ENCODE measurements at regions of chr14 and their contacts with region 1.

Region 1: DNA sequence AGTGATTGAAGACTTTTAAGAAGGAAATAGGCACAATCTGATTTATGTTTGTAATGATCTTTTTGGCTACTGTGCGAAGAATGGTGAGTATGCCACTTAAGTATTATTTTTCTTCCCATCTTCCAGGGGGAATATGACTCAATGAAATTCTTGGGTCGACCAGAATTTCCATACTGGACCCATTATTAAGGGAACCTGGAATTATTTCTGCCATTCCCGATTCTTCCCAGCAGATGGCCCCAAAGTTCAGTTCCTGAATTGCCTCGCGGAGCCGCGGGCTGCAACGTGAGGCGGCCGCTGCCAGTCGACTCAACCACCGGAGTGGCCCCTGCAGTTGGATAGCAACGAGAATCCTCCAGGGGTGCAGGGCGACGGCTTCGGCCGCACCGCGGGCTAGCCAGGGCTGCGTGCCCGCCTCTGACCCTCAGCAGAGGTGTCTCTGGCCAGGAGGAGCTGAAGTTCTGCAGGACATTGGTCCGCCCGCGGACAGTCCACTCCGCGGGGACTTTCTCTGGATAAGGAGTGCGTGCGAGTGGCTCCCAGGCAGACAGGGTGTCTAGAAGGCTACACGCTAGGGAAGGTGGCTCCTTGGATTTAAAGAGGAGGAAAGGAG is 628 bp upstream of the TSHR start:
- DNase-seq: peak; percentile 48 to 71 (median 66)
- ATAC-seq: peak; percentile 84
- H3K4me3 ChIP-seq: peak overlapping the region; percentile 87
- H3K4me3 Mint-ChIP-seq: peak overlapping the region; percentile 80 to 93 (median 88)
- H3K27ac ChIP-seq: no peak overlapping the region
- H3K27ac Mint-ChIP-seq: peak overlapping the region in 4 of 9 donors; percentile 51 to 86 (median 67)
- H3K4me1 ChIP-seq: peaks cover 12 to 18% of the 10 kb centered on the region in 2 donors
- H3K4me1 Mint-ChIP-seq: peaks cover 12 to 51% (median 37%) of the 10 kb centered on the region in 7 donors
- H3K27me3 ChIP-seq: no peaks in the 10 kb centered on the region
- H3K27me3 Mint-ChIP-seq: peaks cover 0 to 61% (median 4%) of the 10 kb centered on the region in 5 donors

Region 2: DNA sequence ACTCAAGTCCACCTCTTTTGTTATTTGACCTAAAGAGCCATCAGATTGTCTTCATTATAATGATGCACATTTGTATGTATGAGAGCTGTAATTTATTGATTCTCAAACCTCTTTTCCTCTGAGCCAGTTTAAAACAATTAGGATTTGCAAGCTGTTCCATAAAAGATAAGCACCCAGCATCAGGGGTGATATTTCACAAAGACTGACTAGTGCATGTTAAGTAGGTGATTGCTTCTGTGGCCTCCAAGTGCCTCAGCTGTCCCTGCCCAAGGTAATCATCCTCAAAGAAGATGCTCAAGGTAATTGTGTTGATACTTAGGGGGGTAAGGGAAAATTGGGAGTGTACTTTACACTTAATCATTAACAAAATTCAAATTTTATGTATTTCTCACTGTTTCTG is 31.4 kb before region 1 on chr14:
- CTCF ChIA-PET with region 1: no interaction called
- POLR2A ChIA-PET with region 1: no interaction called
- intact Hi-C with region 1: no loop called
- DNase-seq: no peak
- ATAC-seq: no peak
- H3K4me3 ChIP-seq: no peak overlapping the region
- H3K4me3 Mint-ChIP-seq: no peak overlapping the region
- H3K27ac ChIP-seq: no peak overlapping the region
- H3K27ac Mint-ChIP-seq: no peak overlapping the region
- H3K4me1 ChIP-seq: no peaks in the 10 kb centered on the region
- H3K4me1 Mint-ChIP-seq: peaks cover 0 to 29% (median 0%) of the 10 kb centered on the region in 7 donors
- H3K27me3 ChIP-seq: no peaks in the 10 kb centered on the region
- H3K27me3 Mint-ChIP-seq: peaks cover 0 to 4% (median 0%) of the 10 kb centered on the region in 5 donors

Region 3: DNA sequence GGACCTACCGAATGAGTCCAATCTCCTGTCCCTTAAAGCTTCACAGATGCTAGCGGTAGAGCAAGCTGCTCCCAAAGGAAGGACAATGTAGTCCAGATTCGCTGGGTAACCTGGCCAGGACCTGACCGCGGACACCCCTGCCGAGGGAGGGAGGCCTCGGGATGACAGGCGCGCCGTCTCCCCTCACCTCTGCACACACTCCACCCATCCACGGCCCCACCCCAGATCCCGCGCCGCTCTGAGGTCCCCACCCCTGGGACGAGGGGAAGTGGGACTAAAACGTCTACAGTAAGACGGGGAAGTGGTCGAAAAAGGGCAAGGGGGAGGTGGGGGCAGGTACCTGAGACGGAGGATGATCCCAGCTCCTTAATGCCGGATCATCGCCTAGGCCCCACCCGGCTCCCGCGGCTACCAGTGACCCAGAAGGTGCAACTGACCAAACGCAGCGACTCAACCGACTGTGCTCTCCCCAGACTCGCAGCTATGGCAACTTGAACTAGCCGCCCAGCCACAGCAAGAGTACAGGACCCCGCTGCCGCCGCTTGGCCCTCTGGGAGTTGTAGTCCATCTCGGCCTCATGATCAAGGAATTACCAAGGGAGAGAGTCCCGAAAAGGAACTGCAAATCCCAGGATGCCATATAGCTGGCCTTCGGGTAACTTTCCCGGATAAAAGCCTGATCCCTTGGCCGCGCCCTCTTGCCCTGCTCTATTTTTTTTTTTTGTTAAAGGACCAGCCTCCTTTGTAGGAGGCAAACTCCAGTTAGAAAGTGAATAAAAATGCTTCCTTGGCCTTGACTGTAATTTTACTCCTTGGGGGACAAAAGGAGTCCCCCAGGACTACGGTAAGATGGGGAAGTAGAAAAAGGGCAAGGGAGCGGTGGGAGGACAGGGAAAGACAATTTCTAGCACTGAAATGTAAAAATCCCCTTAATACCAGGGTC is 13.3 kb before region 1 on chr14 and contains the start of gene CEP128:
- CTCF ChIA-PET with region 1: no interaction called
- POLR2A ChIA-PET with region 1: interaction called, 5 read pairs
- intact Hi-C with region 1: loop called (anchors 1 to 2 kb)
- DNase-seq: peak; percentile 30 to 82 (median 61)
- ATAC-seq: peak; percentile 93
- H3K4me3 ChIP-seq: peak within 1 kb of the TSS; percentile 78
- H3K4me3 Mint-ChIP-seq: peak within 1 kb of the TSS; percentile 84 to 93 (median 89)
- H3K27ac ChIP-seq: peak within 1 kb of the TSS; percentile 44
- H3K27ac Mint-ChIP-seq: peak within 1 kb of the TSS; percentile 52 to 89 (median 78)
- H3K4me1 ChIP-seq: peaks cover 10 to 11% of the 10 kb centered on the region in 2 donors
- H3K4me1 Mint-ChIP-seq: peaks cover 18 to 33% (median 20%) of the 10 kb centered on the region in 7 donors
- H3K27me3 ChIP-seq: no peaks in the 10 kb centered on the region
- H3K27me3 Mint-ChIP-seq: peaks cover 0 to 6% (median 4%) of the 10 kb centered on the region in 5 donors
- total RNA-seq, gene CEP128: 7.7 to 22.8 (median 10.1) TPM

Region 4: DNA sequence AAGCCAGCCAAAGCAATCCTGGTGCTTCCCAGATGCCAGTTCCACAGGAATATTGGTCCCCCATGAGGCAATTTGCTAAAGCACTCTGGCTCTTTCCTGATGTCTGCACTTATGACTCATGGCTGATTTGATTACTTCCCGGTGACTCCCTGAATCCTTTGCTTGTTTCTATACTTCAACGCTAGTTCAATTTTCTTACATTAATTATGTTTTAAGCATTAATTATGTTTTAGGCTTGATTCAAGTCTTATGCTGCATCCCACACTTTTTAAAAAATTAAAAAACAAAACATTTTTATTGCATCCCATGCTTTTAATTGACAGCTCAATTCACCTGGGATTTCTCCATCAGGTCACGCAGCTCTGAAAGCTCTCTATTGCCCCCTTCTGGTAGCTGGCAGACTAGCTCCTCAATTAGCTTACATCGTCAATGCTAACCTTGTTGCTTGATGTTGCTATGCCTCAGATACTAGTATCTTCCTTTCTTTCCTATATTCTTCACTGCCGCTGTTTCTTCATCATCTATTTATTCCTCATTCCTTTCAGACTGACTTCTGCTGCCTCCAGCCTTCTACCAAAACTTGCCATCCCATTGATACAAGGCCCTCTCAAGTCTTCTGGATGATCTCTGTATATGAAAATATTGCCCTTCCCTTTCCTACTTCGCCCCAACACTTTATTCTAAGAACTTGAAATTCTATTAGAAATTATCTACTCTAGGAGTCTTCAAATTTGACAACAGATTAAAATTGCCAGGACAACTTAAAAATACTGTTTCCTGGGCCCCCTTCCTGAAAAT is 32.6 kb after region 1 on chr14:
- CTCF ChIA-PET with region 1: interaction called, 81 read pairs
- POLR2A ChIA-PET with region 1: interaction called, 5 read pairs
- intact Hi-C with region 1: loop called (anchors 1 kb)
- DNase-seq: peak; percentile 13 to 74 (median 58)
- ATAC-seq: peak; percentile 85
- H3K4me3 ChIP-seq: no peak overlapping the region
- H3K4me3 Mint-ChIP-seq: no peak overlapping the region
- H3K27ac ChIP-seq: no peak overlapping the region
- H3K27ac Mint-ChIP-seq: no peak overlapping the region
- H3K4me1 ChIP-seq: no peaks in the 10 kb centered on the region
- H3K4me1 Mint-ChIP-seq: peaks cover 0 to 14% (median 0%) of the 10 kb centered on the region in 7 donors
- H3K27me3 ChIP-seq: no peaks in the 10 kb centered on the region
- H3K27me3 Mint-ChIP-seq: peaks cover 0 to 21% (median 11%) of the 10 kb centered on the region in 5 donors

Region 5: DNA sequence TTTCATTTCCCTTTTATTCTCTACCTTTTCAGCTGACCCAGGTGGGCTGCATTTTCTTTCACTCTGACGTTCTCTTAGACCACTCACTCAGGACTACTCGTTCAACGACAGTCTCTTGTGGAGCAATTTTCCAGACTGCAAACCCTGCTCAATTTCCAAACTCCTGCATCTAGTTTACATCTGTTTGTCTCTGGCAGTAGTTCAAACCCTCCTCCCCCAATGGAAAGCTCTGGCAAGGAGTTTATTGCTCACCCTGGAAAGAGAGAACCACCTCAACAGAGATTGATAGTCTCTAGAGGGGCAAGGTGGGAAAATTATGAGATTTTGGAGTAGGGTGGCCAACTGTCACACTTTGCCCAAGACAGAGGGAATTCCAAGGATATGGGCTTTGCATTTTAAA is 130.8 kb after region 1 on chr14:
- CTCF ChIA-PET with region 1: no interaction called
- POLR2A ChIA-PET with region 1: no interaction called
- intact Hi-C with region 1: no loop called
- DNase-seq: no peak
- ATAC-seq: no peak
- H3K4me3 ChIP-seq: no peak overlapping the region
- H3K4me3 Mint-ChIP-seq: no peak overlapping the region
- H3K27ac ChIP-seq: no peak overlapping the region
- H3K27ac Mint-ChIP-seq: no peak overlapping the region
- H3K4me1 ChIP-seq: no peaks in the 10 kb centered on the region
- H3K4me1 Mint-ChIP-seq: no peaks in the 10 kb centered on the region
- H3K27me3 ChIP-seq: no peaks in the 10 kb centered on the region
- H3K27me3 Mint-ChIP-seq: no peaks in the 10 kb centered on the region

Region 6: GRCh38 chr14:81164167-81164774 is 209.5 kb after region 1 on chr14:
- CTCF ChIA-PET with region 1: no interaction called
- POLR2A ChIA-PET with region 1: no interaction called
- intact Hi-C with region 1: loop called in 1 of 2 experiments (anchors 1 kb)
- DNase-seq: peak in 5 of 9 donors; percentile 6 to 56 (median 10)
- ATAC-seq: peak; percentile 79
- H3K4me3 ChIP-seq: no peak overlapping the region
- H3K4me3 Mint-ChIP-seq: no peak overlapping the region
- H3K27ac ChIP-seq: no peak overlapping the region
- H3K27ac Mint-ChIP-seq: no peak overlapping the region
- H3K4me1 ChIP-seq: peaks cover under 1 to 2% of the 10 kb centered on the region in 2 donors
- H3K4me1 Mint-ChIP-seq: peaks cover under 1 to 24% (median 11%) of the 10 kb centered on the region in 7 donors
- H3K27me3 ChIP-seq: no peaks in the 10 kb centered on the region
- H3K27me3 Mint-ChIP-seq: no peaks in the 10 kb centered on the region

Region 7: GRCh38 chr14:81211844-81212243 is 257.1 kb after region 1 on chr14:
- CTCF ChIA-PET with region 1: interaction called, 3 read pairs
- POLR2A ChIA-PET with region 1: no interaction called
- intact Hi-C with region 1: loop called in 1 of 2 experiments (anchors 1 kb)
- DNase-seq: peak in 6 of 9 donors; percentile 5 to 37 (median 18)
- ATAC-seq: peak; percentile 82
- H3K4me3 ChIP-seq: no peak overlapping the region
- H3K4me3 Mint-ChIP-seq: no peak overlapping the region
- H3K27ac ChIP-seq: no peak overlapping the region
- H3K27ac Mint-ChIP-seq: peak overlapping the region in 2 of 9 donors; percentile 23 to 72
- H3K4me1 ChIP-seq: no peaks in the 10 kb centered on the region
- H3K4me1 Mint-ChIP-seq: peaks cover 32 to 66% (median 56%) of the 10 kb centered on the region in 7 donors
- H3K27me3 ChIP-seq: no peaks in the 10 kb centered on the region
- H3K27me3 Mint-ChIP-seq: no peaks in the 10 kb centered on the region

Region 8: DNA sequence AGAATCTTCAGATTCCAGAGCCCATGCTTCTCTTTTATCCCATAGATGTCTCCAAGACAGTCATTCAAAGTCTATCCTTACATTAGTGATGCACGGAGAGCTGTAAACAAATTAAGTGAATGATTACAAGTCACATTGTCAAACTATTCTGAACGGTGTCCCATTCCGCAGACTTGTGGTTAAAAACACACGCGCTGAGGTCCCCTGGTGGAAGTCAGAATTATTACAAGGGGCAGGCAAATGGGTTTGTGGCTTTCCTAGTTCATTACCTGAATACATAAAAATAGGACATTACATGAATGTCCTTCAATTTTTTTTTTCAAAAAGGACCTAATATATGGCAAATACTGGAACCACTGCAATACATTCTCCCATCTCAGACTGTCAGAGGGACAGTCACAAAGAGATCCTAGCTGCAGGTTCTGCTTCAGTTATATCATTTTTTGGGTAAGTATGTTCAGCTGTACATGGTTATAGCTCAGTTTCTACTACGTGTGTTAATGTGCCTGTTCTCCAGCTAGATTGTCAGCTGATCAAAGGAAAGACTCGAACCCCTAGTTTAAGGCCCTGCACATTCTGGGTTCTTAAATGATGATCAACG is 498.5 kb after region 1 on chr14:
- CTCF ChIA-PET with region 1: no interaction called
- POLR2A ChIA-PET with region 1: no interaction called
- intact Hi-C with region 1: loop called in 1 of 2 experiments (anchors 1 kb)
- DNase-seq: peak in 7 of 9 donors; percentile 17 to 46 (median 34)
- ATAC-seq: peak; percentile 86
- H3K4me3 ChIP-seq: no peak overlapping the region
- H3K4me3 Mint-ChIP-seq: peak overlapping the region in 1 of 10 donors; percentile 19
- H3K27ac ChIP-seq: no peak overlapping the region
- H3K27ac Mint-ChIP-seq: no peak overlapping the region
- H3K4me1 ChIP-seq: no peaks in the 10 kb centered on the region
- H3K4me1 Mint-ChIP-seq: peaks cover 0 to 7% (median 0%) of the 10 kb centered on the region in 7 donors
- H3K27me3 ChIP-seq: no peaks in the 10 kb centered on the region
- H3K27me3 Mint-ChIP-seq: peaks cover 0 to 18% (median 5%) of the 10 kb centered on the region in 5 donors

Region 9: DNA sequence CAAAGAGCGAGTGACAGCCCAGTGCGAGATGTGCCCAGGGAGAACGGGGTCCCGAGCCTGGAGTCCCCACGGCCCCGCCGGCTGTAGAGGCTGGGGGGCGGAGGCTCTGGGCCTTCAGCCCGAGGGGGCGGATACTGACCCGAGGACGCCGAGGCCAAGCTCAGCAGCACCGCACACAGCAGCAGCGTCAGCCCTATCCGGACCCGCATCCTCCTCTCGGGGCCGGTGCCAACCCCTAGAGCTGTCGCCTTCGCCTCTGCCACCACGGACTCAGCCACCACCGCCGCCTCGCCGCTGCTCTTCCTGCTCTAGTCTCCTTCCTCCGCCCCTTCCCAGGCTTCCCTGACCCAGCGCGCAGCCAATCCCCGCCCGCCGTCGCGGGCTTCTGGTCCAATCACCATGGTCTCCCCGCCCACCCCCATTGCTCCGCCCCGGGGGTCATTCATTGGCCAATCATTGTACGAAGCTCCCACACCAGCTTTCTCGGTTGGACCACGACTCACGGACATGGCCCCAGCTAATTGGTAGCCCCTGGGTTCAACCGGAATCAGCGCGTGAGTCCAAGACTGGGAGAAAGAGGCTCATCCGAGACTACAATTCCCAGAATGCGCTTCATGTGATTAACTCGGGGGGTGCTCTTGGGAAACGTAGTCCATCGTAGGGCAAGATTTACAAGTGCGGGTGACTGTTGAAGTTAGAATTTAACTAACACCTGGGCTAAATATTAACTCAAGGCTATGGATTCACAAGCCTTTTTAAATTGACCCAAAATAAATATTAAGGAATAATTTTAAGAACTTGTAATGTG is 578.9 kb after region 1 on chr14 and contains the start of gene SEL1L:
- CTCF ChIA-PET with region 1: no interaction called
- POLR2A ChIA-PET with region 1: interaction called, 3 read pairs
- intact Hi-C with region 1: loop called in 1 of 2 experiments (anchors 5 kb)
- DNase-seq: peak; percentile 98 to 100 (median 99)
- ATAC-seq: peak; percentile 96
- H3K4me3 ChIP-seq: peak within 1 kb of the TSS; percentile 87
- H3K4me3 Mint-ChIP-seq: peak within 1 kb of the TSS; percentile 85 to 98 (median 96)
- H3K27ac ChIP-seq: peak within 1 kb of the TSS; percentile 77
- H3K27ac Mint-ChIP-seq: peak within 1 kb of the TSS; percentile 81 to 97 (median 92)
- H3K4me1 ChIP-seq: peaks cover 24% of the 10 kb centered on the region in 2 donors
- H3K4me1 Mint-ChIP-seq: peaks cover 33 to 71% (median 68%) of the 10 kb centered on the region in 7 donors
- H3K27me3 ChIP-seq: no peaks in the 10 kb centered on the region
- H3K27me3 Mint-ChIP-seq: peaks cover 0 to 3% (median under 1%) of the 10 kb centered on the region in 5 donors
- total RNA-seq, gene SEL1L: 43.5 to 72.2 (median 57.0) TPM

Measured in naive thymus-derived CD4-positive, alpha-beta T cell (primary cell).